B cell (primary cell): ENCODE measurements at regions of chr9 and their contacts with region 1.

Region 1: DNA sequence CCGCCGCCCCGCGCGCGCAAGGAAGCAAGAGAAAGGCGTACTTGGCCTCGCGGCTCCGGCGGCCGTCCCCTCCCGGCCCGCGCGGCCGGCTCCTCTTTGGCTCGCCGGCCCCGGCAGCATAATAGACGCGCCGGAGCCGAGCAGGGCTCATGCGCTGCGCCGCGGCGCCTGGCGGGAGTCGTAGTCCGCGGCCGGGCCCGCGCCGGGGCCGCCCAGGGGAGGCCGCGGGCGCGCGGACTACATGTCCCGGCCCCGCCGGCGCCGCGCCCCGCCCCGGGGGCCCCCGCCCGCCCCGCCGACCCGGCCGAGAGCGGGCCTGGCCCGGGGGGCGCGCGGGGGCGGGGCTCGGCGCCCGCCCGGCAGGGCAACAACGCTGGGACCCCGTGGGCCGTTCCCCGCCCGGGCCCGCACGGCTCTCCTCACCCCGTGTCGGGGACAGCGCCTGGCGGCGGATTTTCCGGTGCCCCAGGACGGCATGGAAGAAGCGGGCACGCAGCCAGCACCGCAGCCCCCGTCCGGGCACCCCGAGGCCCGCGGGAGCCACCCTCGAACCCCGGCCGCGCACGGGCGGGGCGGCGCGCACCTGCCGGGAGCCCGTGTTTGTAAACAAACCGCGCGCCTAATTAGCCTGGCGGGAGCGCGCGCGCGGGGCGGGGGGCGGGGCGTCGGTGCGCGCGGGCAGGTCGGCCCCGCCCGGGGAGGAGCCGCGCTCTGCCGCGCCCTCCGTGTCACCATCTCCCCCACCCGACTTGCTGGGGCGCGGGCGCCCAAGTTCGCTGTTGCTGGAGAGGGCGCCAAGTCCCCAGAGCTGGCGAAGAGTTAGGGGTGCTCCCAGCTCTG is at the start of gene BRD3:
- DNase-seq: peak; percentile 93
- ATAC-seq: peak; percentile 84
- H3K4me3 ChIP-seq: peak within 1 kb of the TSS; percentile 54 to 85 (median 68)
- H3K4me3 Mint-ChIP-seq: peak within 1 kb of the TSS; percentile 90
- H3K27ac ChIP-seq: peak within 1 kb of the TSS; percentile 75 to 86
- H3K27ac Mint-ChIP-seq: peak within 1 kb of the TSS; percentile 89
- H3K4me1 ChIP-seq: peaks cover 20 to 30% of the 10 kb centered on the region in 2 donors
- H3K4me1 Mint-ChIP-seq: peaks cover 29% of the 10 kb centered on the region
- H3K27me3 ChIP-seq: peaks cover 0 to 23% (median 10%) of the 10 kb centered on the region in 4 experiments
- H3K27me3 Mint-ChIP-seq: peaks cover 14% of the 10 kb centered on the region
- CTCF ChIP-seq: no peak
- total RNA-seq, gene BRD3: 38.0 and 47.5 TPM in 2 replicates

Region 2: GRCh38 chr9:133792721-133793470 is 275.2 kb before region 1 on chr9:
- CTCF ChIA-PET with region 1: no interaction called
- POLR2A ChIA-PET with region 1: no interaction called
- intact Hi-C with region 1: loop called (anchors 2 kb)
- DNase-seq: peak; percentile 77
- ATAC-seq: peak; percentile 85
- H3K4me3 ChIP-seq: peak overlapping the region in 3 of 5 experiments; percentile 11 to 43 (median 20)
- H3K4me3 Mint-ChIP-seq: peak overlapping the region; percentile 52
- H3K27ac ChIP-seq: peak overlapping the region; percentile 17 to 41
- H3K27ac Mint-ChIP-seq: peak overlapping the region; percentile 70
- H3K4me1 ChIP-seq: peaks cover 48 to 56% of the 10 kb centered on the region in 2 donors
- H3K4me1 Mint-ChIP-seq: peaks cover 69% of the 10 kb centered on the region
- H3K27me3 ChIP-seq: no peaks in the 10 kb centered on the region
- H3K27me3 Mint-ChIP-seq: no peaks in the 10 kb centered on the region
- CTCF ChIP-seq: peak; percentile 87

Region 3: DNA sequence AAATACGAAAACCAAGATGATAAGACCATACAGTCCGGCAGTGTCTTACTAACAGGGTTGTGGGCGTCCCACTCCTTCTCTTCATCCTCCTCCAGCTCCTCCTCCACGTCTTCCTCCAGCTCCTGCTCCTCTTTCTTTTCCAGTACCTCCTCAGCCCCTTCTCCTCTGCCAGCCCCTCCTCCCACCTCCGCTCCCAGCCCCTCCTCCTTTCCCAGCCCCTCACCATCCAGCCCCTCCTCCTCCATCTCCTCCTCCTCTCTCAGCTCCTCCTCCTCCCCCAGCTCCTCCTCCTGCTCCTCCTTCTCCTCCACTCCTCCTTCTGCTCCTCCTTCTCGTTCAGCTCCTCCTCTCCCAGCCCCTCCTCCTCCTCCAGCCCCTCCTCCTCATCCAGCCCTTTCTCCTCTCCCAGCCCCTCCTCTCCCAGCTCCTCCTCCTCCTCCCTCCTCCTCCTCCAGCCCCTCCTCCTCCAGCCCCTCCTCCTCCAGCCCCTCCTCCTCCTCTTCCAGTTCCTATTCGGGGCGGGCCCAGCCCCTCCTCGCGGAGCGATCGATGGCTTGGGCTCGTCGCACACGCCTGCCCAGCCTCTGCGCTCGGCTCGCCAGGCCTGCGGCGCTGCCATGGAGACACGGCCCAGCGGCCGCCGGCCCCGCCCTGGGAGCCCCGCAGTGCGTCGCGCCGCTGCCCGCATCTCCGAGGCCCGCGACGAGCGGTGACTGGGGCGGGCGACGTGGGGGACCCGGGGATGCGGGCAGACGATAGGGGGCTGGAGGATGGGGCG is 43.1 kb before region 1 on chr9 and contains the start of gene BRD3OS:
- CTCF ChIA-PET with region 1: interaction called, 3 read pairs
- POLR2A ChIA-PET with region 1: interaction called, 10 read pairs
- intact Hi-C with region 1: loop called (anchors 1 kb)
- DNase-seq: peak; percentile 97
- ATAC-seq: peak; percentile 93
- H3K4me3 ChIP-seq: peak within 1 kb of the TSS; percentile 53 to 85 (median 76)
- H3K4me3 Mint-ChIP-seq: peak within 1 kb of the TSS; percentile 86
- H3K27ac ChIP-seq: peak within 1 kb of the TSS; percentile 34 to 69
- H3K27ac Mint-ChIP-seq: peak within 1 kb of the TSS; percentile 88
- H3K4me1 ChIP-seq: peaks cover 6 to 19% of the 10 kb centered on the region in 2 donors
- H3K4me1 Mint-ChIP-seq: peaks cover 11% of the 10 kb centered on the region
- H3K27me3 ChIP-seq: no peaks in the 10 kb centered on the region
- H3K27me3 Mint-ChIP-seq: no peaks in the 10 kb centered on the region
- CTCF ChIP-seq: no peak
- total RNA-seq, gene BRD3OS: 25.3 and 26.8 TPM in 2 replicates

Region 4: GRCh38 chr9:134088063-134088725 is 20.1 kb after region 1 on chr9:
- CTCF ChIA-PET with region 1: no interaction called
- POLR2A ChIA-PET with region 1: no interaction called
- intact Hi-C with region 1: no loop called
- DNase-seq: no peak
- ATAC-seq: no peak
- H3K4me3 ChIP-seq: no peak overlapping the region
- H3K4me3 Mint-ChIP-seq: no peak overlapping the region
- H3K27ac ChIP-seq: no peak overlapping the region
- H3K27ac Mint-ChIP-seq: no peak overlapping the region
- H3K4me1 ChIP-seq: no peaks in the 10 kb centered on the region
- H3K4me1 Mint-ChIP-seq: no peaks in the 10 kb centered on the region
- H3K27me3 ChIP-seq: peaks cover 0 to 3% (median 0%) of the 10 kb centered on the region in 4 experiments
- H3K27me3 Mint-ChIP-seq: peaks cover 10% of the 10 kb centered on the region
- CTCF ChIP-seq: no peak

Region 5: DNA sequence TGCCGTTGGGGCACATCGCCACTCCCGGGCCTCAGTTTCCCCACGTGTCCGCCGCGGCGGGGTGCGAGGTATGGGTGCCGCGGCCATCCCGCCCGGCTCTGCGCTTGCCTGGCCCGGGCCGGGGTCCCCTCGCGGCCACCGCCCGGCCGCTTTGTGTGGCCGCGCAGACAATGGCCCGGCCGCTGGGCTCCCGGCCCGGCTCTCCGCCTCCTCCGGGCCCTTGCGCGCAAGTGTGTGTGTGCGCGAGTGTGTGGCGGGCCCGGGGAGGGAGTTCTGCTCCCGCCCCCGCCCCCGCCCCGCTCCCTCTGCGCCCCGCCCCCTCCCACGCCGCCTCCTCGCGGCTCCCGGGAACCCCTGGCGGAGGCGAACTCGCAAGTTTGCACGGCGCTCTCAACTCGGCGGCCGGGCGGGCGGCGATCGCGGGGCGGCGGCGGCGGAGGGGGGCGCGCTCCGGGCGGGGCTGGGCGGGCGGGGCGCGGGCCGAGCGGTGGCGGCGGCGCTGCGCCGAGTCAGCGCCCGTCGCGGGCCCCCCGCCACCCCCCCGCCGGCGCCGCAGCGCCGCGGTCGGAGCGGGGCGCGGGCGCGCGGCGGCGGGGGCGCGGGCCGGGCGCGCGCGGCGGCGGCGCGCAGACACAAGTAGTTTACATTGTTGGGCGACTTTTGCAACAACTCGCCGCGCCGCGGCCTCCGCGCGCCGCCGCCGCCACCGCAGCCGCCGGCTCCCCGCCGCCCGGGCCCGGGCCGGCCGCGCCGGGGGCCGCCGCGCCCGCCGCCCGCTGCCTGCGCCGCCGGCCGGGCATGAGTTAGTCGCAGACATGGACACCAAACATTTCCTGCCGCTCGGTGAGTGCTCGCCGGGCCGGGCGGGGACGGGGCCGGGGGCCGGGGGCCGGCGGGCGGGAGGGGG is 257.9 kb after region 1 on chr9 and contains the start of gene RXRA:
- CTCF ChIA-PET with region 1: no interaction called
- POLR2A ChIA-PET with region 1: no interaction called
- intact Hi-C with region 1: loop called (anchors 10 kb)
- DNase-seq: peak; percentile 83
- ATAC-seq: peak; percentile 77
- H3K4me3 ChIP-seq: peak within 1 kb of the TSS; percentile 17 to 85 (median 78)
- H3K4me3 Mint-ChIP-seq: peak within 1 kb of the TSS; percentile 82
- H3K27ac ChIP-seq: no peak within 1 kb of the TSS
- H3K27ac Mint-ChIP-seq: peak within 1 kb of the TSS; percentile 68
- H3K4me1 ChIP-seq: peaks cover 11 to 20% of the 10 kb centered on the region in 2 donors
- H3K4me1 Mint-ChIP-seq: peaks cover 17% of the 10 kb centered on the region
- H3K27me3 ChIP-seq: peaks cover 0 to 13% (median 3%) of the 10 kb centered on the region in 4 experiments
- H3K27me3 Mint-ChIP-seq: no peaks in the 10 kb centered on the region
- CTCF ChIP-seq: no peak
- total RNA-seq, gene RXRA: 6.7 and 6.8 TPM in 2 replicates